Calu3 (cell line): ENCODE measurements at regions of chr21 and their contacts with region 1.

Region 1: DNA sequence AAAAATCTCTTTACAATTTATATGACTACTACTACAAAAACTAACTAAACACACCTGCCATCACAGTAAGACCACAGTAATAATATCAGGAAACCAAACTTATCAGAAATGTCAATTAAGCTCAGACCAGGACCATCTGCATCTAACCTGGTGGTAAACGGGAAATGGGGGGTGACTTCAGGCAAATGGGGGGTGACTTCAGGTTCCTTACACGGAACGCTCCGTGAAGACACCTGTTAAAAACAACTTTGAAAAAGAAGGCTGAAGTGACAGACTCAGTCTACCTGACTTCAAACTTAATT is 15.8 kb downstream of the PRDM15 start:
- DNase-seq: no peak
- H3K4me3 Mint-ChIP-seq: no peak overlapping the region
- H3K27ac Mint-ChIP-seq: no peak overlapping the region
- H3K4me1 Mint-ChIP-seq: no peaks in the 10 kb centered on the region
- H3K27me3 Mint-ChIP-seq: no peaks in the 10 kb centered on the region
- CTCF ChIP-seq: no peak

Region 2: GRCh38 chr21:41631564-41632461 is 231.6 kb before region 1 on chr21:
- CTCF ChIA-PET with region 1: interaction called, 13 read pairs
- intact Hi-C with region 1: no loop called
- DNase-seq: peak; percentile 82
- H3K4me3 Mint-ChIP-seq: peak overlapping the region; percentile 36
- H3K27ac Mint-ChIP-seq: peak overlapping the region; percentile 78
- H3K4me1 Mint-ChIP-seq: peaks cover 45% of the 10 kb centered on the region
- H3K27me3 Mint-ChIP-seq: no peaks in the 10 kb centered on the region
- CTCF ChIP-seq: no peak